ENCODE measurements at regions of chr9 and their contacts with region 1.

Region 1: DNA sequence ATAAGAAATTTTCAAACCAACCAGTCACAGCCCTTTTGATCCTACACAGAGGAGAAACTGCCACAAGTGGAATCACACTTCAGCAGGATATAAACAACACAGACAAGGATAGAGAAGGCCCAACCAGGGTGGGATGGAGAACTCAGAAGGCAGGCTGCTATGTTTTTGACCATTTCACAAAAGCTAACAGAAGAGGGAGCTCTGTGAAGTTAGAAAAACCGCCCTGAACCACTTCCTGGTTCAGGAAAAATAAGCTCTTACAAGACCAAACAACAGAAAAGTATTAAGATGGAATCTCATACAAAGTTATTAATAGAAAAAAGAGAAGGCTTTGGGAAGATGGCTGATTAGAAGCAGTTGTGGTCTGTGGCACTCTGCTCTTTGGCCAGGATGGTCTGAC is 975 bp upstream of the IFNB1 start:
- DNase-seq: no peak
- ATAC-seq: peak; percentile 42
- H3K4me3 Mint-ChIP-seq: no peak overlapping the region
- H3K27ac Mint-ChIP-seq: no peak overlapping the region
- H3K4me1 Mint-ChIP-seq: peaks cover 28% of the 10 kb centered on the region
- H3K27me3 Mint-ChIP-seq: no peaks in the 10 kb centered on the region

Region 2: GRCh38 chr9:20980832-20981455 is 97.8 kb before region 1 on chr9:
- CTCF ChIA-PET with region 1: no interaction called
- POLR2A ChIA-PET with region 1: no interaction called
- intact Hi-C with region 1: no loop called
- DNase-seq: no peak
- ATAC-seq: no peak
- H3K4me3 Mint-ChIP-seq: no peak overlapping the region
- H3K27ac Mint-ChIP-seq: no peak overlapping the region
- H3K4me1 Mint-ChIP-seq: peaks cover 4% of the 10 kb centered on the region
- H3K27me3 Mint-ChIP-seq: no peaks in the 10 kb centered on the region

Region 3: GRCh38 chr9:21043841-21044240 is 34.9 kb before region 1 on chr9:
- CTCF ChIA-PET with region 1: no interaction called
- POLR2A ChIA-PET with region 1: no interaction called
- intact Hi-C with region 1: loop called in 1 of 2 experiments (anchors 2 kb)
- DNase-seq: no peak
- ATAC-seq: no peak
- H3K4me3 Mint-ChIP-seq: no peak overlapping the region
- H3K27ac Mint-ChIP-seq: no peak overlapping the region
- H3K4me1 Mint-ChIP-seq: peaks cover 6% of the 10 kb centered on the region
- H3K27me3 Mint-ChIP-seq: peaks cover 2% of the 10 kb centered on the region

Region 4: DNA sequence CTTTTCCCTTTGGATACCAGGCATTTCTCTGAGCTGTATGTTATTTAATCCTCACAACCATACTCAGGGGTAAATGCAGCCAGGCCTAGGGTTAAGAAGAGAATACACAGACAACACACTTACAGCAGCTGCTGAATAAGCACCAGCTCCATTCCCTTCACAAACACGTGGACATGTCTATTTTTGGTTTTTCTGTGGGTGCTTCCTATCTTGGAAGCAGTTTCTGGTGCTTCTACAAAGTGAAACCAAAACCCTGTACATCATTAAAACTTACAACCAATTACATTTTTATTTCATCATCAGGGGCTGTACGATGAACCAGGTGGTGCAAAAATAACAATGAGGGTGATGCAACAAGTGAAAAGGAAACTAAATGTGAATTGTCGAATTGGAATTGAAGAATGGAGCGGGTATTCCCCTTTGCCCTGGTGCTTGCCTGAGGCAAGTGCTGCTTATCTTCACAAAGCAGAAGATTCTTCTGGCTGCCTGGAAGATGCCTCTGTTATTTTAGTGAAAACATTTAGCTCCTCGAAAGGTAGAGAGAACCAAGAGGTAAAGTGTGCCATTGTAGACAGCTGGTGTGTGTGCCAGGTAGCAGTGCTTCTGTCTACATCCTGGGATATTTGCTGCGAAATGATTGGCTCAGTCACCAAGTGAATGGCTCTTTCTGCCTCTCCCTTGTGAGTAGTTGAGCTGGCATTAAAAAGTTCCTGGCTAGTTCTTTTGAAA is 17.6 kb after region 1 on chr9:
- CTCF ChIA-PET with region 1: interaction called, 10 read pairs
- POLR2A ChIA-PET with region 1: no interaction called
- intact Hi-C with region 1: no loop called
- DNase-seq: peak; percentile 64
- ATAC-seq: peak; percentile 95
- H3K4me3 Mint-ChIP-seq: peak overlapping the region; percentile 58
- H3K27ac Mint-ChIP-seq: peak overlapping the region; percentile 87
- H3K4me1 Mint-ChIP-seq: peaks cover 31% of the 10 kb centered on the region
- H3K27me3 Mint-ChIP-seq: no peaks in the 10 kb centered on the region